ENCODE measurements at regions of chr17 and their contacts with region 1.

Region 1: DNA sequence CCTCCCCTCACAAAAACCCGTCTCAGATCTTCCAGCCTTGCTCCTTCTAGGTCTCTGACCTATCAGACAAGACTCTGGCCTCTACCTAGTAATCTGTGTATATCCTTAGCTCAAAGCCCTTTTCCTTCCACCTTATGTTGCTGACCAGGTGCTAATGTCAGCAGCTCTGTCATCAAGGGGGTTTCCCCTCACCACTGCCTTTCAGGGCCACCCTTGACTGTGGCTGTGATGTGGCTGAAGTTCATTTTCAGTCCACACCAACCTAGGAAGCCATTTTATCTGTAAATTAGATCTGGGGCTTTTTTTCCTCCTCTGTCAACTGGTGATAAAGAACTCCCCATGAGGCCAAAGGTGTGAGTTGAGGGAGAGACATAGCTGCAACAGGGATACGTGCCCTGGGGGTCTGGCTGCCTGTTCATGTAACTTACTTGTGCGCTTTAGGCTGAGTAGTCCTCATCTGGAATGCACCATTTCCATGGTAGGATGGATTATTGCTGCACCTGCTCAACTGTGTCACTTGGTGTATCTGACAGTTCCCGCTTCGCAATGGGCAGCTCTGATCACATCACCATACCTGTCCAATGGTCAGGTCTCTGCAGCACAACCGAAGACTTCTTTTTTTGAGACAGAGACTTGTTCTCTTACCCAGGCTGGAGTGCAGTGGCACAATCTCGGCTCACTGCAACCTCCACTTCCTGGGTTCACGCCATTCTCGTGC is 14.7 kb upstream of the RUNDC3A start:
- DNase-seq: no peak
- ATAC-seq: no peak
- H3K4me3 ChIP-seq: no peak overlapping the region
- H3K27ac ChIP-seq: no peak overlapping the region
- H3K4me1 ChIP-seq: no peaks in the 10 kb centered on the region
- H3K27me3 ChIP-seq: no peaks in the 10 kb centered on the region

Region 2: DNA sequence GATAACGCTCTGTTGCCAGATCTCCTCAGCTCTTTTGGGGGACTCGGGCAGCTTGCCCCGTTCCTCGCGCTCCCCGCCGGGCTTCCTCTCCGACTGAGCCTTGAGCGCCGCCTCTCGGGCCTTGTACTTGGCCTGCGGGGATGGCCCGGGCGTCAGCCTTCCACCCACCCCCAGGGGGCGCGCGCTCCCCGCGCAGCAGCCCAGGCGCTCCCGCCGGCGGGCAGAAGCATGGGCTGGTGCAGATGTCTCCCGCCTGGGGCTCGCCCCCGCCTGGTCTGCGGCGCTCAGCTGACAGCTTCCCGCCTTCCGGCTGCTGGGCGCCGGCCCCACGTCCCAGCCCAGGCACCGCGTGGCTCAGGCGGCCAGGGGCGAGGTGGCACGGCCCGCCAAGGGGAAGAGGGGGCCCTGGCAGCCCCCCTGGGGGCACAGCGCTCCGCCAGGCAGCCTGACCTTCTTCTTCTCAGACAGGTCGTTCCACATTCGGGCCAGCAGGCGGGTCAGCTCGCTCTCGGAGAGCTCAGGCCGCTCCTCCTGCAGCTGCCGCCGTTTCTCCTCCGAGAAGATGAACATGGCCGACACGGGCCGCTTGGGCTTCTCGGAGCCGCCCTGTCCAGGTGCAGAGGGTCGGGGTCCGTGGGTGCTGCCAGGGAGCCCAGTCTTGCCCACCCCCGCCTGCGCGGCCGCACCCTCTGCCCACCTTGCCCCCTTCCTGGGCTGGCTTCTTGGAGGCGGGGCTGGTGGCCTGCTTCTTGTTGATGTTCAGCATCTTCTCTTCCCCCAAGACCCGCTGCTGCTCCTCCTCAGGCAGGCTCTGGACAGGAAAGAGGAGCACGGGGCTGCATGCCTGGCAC is 83.1 kb before region 1 on chr17:
- intact Hi-C with region 1: no loop called
- DNase-seq: peak; percentile 88 to 96 (median 95)
- ATAC-seq: peak; percentile 87 to 93
- H3K4me3 ChIP-seq: no peak overlapping the region
- H3K27ac ChIP-seq: no peak overlapping the region
- H3K4me1 ChIP-seq: no peaks in the 10 kb centered on the region
- H3K27me3 ChIP-seq: no peaks in the 10 kb centered on the region

Region 3: GRCh38 chr17:44241106-44241624 is 52.5 kb before region 1 on chr17:
- intact Hi-C with region 1: loop called in 1 of 4 experiments (anchors 5 kb)
- DNase-seq: no peak
- ATAC-seq: no peak
- H3K4me3 ChIP-seq: no peak overlapping the region
- H3K27ac ChIP-seq: no peak overlapping the region
- H3K4me1 ChIP-seq: no peaks in the 10 kb centered on the region
- H3K27me3 ChIP-seq: no peaks in the 10 kb centered on the region

Measured in right cardiac atrium (tissue), 5 donors.